ENCODE measurements at regions of chr9 and their contacts with region 1.

Region 1: GRCh38 chr9:37005517-37006140 is 28.4 kb downstream of the PAX5 start:
- H3K4me3 Mint-ChIP-seq: no peak overlapping the region
- H3K27ac Mint-ChIP-seq: no peak overlapping the region
- H3K4me1 Mint-ChIP-seq: no peaks in the 10 kb centered on the region
- H3K27me3 Mint-ChIP-seq: peaks cover 67% of the 10 kb centered on the region

Region 2: GRCh38 chr9:36461323-36461722 is 544.3 kb before region 1 on chr9:
- intact Hi-C with region 1: no loop called
- H3K4me3 Mint-ChIP-seq: no peak overlapping the region
- H3K27ac Mint-ChIP-seq: no peak overlapping the region
- H3K4me1 Mint-ChIP-seq: peaks cover 30% of the 10 kb centered on the region
- H3K27me3 Mint-ChIP-seq: no peaks in the 10 kb centered on the region

Region 3: DNA sequence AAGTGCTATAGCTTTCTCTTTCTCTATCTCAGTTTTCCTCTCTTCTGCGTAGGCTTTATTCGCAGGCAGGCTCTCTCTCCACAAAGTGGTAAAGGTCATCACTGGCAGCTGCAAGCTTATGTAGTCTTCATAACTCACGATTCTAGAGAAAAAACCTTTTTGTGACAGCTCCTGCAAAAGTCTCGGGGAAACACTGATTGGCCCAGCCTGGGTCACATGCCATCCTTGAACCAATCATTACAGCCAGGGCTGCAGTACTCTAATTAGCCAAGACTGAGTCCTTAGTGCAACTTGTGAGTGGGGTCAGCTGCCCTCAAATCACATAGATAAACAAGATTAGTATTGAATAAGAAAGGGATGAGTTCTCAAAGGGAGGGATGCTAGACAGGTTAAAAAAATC is 626.9 kb after region 1 on chr9:
- intact Hi-C with region 1: loop called (anchors 5 kb)
- H3K4me3 Mint-ChIP-seq: no peak overlapping the region
- H3K27ac Mint-ChIP-seq: no peak overlapping the region
- H3K4me1 Mint-ChIP-seq: no peaks in the 10 kb centered on the region
- H3K27me3 Mint-ChIP-seq: peaks cover 7% of the 10 kb centered on the region